Esophagus muscularis mucosa (tissue), 4 donors: ENCODE measurements at regions of chr9 and their contacts with region 1.

Region 1: DNA sequence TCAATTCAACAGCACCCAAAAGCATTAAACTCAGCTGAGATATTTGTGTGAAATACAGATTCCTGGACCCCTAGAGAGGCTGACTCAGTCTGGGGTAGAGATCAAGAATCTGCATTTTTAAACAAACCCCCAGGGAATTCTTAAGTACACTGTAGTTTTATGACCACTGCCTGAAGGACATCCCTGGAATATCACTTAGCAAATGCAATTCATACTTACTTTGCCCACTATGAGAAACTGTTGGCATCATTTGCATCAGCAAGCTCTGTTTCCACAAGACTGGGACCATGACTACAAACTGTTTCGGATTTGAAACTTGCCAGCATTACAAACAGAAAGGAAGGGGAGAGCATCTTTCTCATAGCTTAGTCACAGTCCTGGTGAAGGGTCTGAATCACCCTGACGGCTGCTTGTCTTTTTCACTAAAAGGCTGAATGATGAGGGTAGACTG is 63.7 kb downstream of the MLLT3 start:
- DNase-seq: peak; percentile 37
- H3K4me3 ChIP-seq: no peak overlapping the region
- H3K27ac ChIP-seq: peak overlapping the region in 1 of 4 donors; percentile 28
- H3K4me1 ChIP-seq: peaks cover 28 to 63% (median 59%) of the 10 kb centered on the region in 4 donors
- H3K27me3 ChIP-seq: no peaks in the 10 kb centered on the region
- CTCF ChIP-seq: no peak
- EP300 ChIP-seq: no peak
- POLR2A ChIP-seq: no peak

Region 2: DNA sequence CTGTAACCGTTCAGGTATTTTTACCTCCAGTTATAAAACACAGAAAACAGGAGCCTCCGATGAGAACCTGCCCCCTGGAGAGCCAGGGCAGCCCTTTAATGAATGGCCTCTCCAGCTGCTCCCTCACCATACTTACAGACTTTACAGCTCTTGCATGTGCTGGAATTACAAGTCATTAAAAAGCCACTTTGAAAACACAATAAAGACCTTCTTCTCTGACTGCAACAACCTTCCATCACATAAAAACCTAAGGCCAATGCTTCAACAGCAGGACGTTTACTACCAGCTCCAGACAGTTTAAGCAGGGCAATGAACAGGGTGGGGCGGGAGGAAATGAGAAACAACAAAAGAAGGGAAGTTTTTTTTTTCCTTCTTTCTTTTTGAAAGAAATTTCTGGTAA is 150.1 kb before region 1 on chr9:
- intact Hi-C with region 1: no loop called
- DNase-seq: no peak
- H3K4me3 ChIP-seq: no peak overlapping the region
- H3K27ac ChIP-seq: no peak overlapping the region
- H3K4me1 ChIP-seq: peaks cover 0 to 7% (median 0%) of the 10 kb centered on the region in 4 donors
- H3K27me3 ChIP-seq: no peaks in the 10 kb centered on the region
- CTCF ChIP-seq: no peak
- EP300 ChIP-seq: no peak
- POLR2A ChIP-seq: no peak

Region 3: DNA sequence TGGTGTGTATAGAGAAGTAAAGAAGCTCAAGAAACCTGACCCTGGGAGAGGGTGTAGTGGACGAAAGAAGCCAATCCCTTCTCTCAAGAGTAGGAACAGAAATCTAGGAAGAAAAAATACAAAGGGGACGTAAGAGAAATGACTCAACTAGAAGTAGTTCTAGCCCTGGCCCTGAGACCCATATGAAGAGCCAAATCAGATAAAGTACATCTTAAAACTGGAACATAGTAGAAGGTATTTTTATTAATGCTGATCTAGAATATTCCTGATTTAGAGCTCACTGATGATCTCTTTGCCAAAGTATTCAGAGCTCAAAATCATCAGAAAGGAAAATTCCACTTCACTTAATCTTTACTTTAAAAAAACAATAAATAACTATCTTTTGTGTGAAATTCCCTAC is 121.1 kb before region 1 on chr9:
- intact Hi-C with region 1: no loop called
- DNase-seq: no peak
- H3K4me3 ChIP-seq: no peak overlapping the region
- H3K27ac ChIP-seq: no peak overlapping the region
- H3K4me1 ChIP-seq: peaks cover 4 to 25% (median 7%) of the 10 kb centered on the region in 4 donors
- H3K27me3 ChIP-seq: no peaks in the 10 kb centered on the region
- CTCF ChIP-seq: no peak
- EP300 ChIP-seq: no peak
- POLR2A ChIP-seq: no peak

Region 4: DNA sequence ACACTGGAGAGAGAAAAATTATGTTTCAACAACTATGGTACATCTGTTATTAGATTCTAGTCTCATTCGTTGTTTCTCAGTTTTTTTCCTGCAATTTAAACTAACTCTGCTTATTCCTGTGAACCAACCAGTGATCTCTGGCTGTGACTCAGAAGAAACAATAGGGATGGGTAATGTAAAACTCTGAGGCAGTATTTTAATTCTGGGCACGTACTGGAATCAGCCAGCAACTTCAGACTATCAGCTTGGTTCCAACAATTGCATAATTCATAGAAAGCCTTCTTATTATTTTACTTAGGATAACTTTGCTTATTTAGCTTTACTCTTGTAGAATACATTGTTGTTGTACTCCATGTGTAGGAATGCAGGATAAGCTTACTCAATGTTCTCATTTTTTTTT is 35.0 kb after region 1 on chr9:
- intact Hi-C with region 1: no loop called
- DNase-seq: no peak
- H3K4me3 ChIP-seq: no peak overlapping the region
- H3K27ac ChIP-seq: no peak overlapping the region
- H3K4me1 ChIP-seq: peaks cover 5 to 42% (median 28%) of the 10 kb centered on the region in 4 donors
- H3K27me3 ChIP-seq: no peaks in the 10 kb centered on the region
- CTCF ChIP-seq: no peak
- EP300 ChIP-seq: no peak
- POLR2A ChIP-seq: no peak

Region 5: DNA sequence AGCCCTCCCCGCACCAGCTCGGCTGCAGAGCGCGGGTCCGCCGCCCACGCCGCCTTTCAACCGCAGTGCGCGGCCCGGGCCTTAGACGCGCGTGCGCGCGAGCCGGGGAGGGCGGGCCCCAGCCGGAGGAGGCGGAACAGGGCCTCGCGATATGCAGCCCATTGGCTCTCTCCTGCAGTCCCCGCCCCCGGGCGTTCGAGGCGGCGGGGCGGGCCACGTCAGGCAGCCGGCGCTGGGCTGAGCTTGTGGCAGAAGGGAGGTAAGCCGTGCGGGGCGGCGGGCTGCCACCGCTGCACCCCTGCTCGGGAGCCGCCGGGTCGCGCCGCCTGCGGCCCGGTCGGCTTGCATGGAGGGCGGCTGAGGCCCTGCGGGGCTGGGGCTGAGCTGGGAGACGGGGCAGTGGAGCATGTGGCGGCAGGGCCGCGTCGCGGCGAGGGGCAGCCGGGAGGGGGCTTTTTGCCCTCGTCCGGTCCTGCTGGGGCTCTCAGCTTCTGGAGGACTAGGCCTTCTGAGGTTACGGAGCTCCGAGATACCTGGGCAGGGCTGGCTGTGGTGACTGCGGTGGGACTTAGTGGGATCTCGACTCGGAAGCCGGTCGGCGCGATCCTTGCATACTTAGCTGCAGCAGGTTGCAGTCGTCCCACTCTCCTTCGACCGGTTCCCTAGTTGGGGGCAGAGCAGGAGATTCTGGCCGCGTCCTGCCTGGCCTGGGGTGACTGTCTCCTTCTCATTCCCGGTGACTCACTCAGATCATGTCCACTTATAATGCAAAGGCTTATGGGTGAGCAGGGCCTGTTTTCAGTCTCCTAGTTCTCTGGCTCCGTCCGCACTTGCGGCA is 125.7 kb after region 1 on chr9 and contains the start of gene FOCAD:
- intact Hi-C with region 1: loop called (anchors 10 kb)
- DNase-seq: peak; percentile 98
- H3K4me3 ChIP-seq: peak within 1 kb of the TSS; percentile 77 to 94 (median 92)
- H3K27ac ChIP-seq: peak within 1 kb of the TSS; percentile 92 to 97 (median 96)
- H3K4me1 ChIP-seq: peaks cover 14 to 36% (median 28%) of the 10 kb centered on the region in 4 donors
- H3K27me3 ChIP-seq: no peaks in the 10 kb centered on the region
- CTCF ChIP-seq: peak in 1 of 3 experiments; percentile 8
- EP300 ChIP-seq: no peak
- POLR2A ChIP-seq: peak; percentile 88
- total RNA-seq, gene FOCAD: 17.6 to 27.2 (median 20.1) TPM

Region 6: GRCh38 chr9:21056931-21057330 is 498.3 kb after region 1 on chr9:
- intact Hi-C with region 1: no loop called
- DNase-seq: no peak
- H3K4me3 ChIP-seq: no peak overlapping the region
- H3K27ac ChIP-seq: no peak overlapping the region
- H3K4me1 ChIP-seq: no peaks in the 10 kb centered on the region
- H3K27me3 ChIP-seq: no peaks in the 10 kb centered on the region
- CTCF ChIP-seq: no peak
- EP300 ChIP-seq: no peak
- POLR2A ChIP-seq: no peak